Esophagus muscularis mucosa (tissue), 4 donors: ENCODE measurements at regions of chr6 and their contacts with region 1.

Region 1: DNA sequence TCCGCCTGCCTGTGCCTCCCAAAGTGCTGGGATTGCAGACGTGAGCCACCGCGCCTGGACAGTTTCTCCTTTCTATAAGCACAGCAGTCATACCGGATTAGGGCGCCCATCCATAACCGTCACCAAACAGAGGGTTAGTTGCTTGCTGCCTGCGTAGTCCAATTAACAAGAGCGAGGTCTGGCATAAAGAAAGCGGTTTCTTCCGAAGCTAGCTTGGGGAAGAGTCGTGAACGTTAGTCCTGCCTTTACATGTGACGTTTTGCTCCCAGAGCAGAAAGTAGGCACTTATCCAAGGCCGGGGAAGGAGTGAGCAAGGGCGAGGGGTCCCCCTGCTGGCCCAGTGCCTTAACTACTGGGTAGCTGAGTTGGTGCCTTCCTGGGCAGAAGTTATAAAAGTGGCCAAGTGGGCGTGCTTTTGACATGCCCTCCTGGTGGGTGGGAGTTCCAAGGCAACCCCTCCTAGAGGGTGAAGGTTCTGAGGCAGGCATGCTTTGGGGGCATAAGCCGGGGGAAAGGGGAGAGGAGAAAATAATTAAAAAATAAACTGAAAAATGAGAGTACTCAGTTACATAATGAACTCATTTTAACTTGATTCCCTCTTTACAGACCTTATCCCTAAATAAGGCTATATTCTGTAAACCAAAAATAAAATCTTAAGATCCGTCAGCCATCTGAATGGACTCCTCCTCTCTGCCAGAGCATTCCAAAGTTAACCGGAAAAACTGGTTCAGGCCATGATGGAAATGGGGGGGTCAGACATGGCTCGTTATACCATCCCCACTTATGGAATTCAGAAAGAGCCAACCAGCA is 88.0 kb downstream of the FAM217A start:
- DNase-seq: peak; percentile 96
- H3K4me3 ChIP-seq: peak overlapping the region; percentile 46 to 58 (median 52)
- H3K27ac ChIP-seq: peak overlapping the region; percentile 72 to 80 (median 78)
- H3K4me1 ChIP-seq: peaks cover 9 to 21% (median 18%) of the 10 kb centered on the region in 4 donors
- H3K27me3 ChIP-seq: no peaks in the 10 kb centered on the region
- CTCF ChIP-seq: peak; percentile 80 to 83 (median 81)
- EP300 ChIP-seq: no peak
- POLR2A ChIP-seq: no peak

Region 2: GRCh38 chr6:3848925-3849605 is 141.8 kb before region 1 on chr6 and contains the start of gene FAM50B:
- intact Hi-C with region 1: loop called (anchors 2 kb)
- DNase-seq: peak; percentile 97
- H3K4me3 ChIP-seq: peak within 1 kb of the TSS; percentile 55 to 64 (median 56)
- H3K27ac ChIP-seq: peak within 1 kb of the TSS; percentile 70 to 83 (median 74)
- H3K4me1 ChIP-seq: peaks cover 0 to 24% (median 22%) of the 10 kb centered on the region in 4 donors
- H3K27me3 ChIP-seq: no peaks in the 10 kb centered on the region
- CTCF ChIP-seq: peak; percentile 94 to 97 (median 97)
- EP300 ChIP-seq: no peak
- POLR2A ChIP-seq: no peak
- total RNA-seq, gene FAM50B: 12.5 to 26.6 (median 17.6) TPM

Region 3: DNA sequence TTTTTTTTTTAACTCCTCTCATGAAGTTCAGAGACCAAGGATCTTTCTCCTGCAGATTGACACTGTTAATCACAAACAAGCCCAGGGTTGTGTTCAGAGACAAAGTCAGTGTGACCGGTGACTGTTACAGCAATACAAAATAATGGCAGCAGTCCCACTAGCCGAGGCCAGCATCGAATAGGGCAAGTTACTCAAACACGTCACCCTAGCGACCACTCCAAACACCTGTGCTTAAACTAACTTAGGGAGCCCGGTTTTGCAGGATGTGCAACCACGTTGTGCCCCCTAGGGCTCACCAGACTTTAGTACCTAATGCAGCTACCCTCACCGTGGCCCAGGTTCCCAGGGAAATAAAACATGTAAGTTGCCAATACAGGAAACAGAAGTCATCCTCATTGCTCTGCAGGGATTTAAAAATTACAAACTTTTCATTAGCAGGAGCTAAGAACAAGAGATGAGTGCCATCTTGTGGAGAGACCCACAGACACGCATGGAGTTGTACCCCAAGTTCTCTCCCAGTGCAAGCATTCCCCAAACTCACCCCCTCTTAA is 103.7 kb before region 1 on chr6:
- intact Hi-C with region 1: loop called (anchors 5 kb)
- DNase-seq: no peak
- H3K4me3 ChIP-seq: no peak overlapping the region
- H3K27ac ChIP-seq: no peak overlapping the region
- H3K4me1 ChIP-seq: peaks cover 23 to 50% (median 33%) of the 10 kb centered on the region in 4 donors
- H3K27me3 ChIP-seq: no peaks in the 10 kb centered on the region
- CTCF ChIP-seq: peak; percentile 46 to 59 (median 48)
- EP300 ChIP-seq: no peak
- POLR2A ChIP-seq: no peak

Region 4: DNA sequence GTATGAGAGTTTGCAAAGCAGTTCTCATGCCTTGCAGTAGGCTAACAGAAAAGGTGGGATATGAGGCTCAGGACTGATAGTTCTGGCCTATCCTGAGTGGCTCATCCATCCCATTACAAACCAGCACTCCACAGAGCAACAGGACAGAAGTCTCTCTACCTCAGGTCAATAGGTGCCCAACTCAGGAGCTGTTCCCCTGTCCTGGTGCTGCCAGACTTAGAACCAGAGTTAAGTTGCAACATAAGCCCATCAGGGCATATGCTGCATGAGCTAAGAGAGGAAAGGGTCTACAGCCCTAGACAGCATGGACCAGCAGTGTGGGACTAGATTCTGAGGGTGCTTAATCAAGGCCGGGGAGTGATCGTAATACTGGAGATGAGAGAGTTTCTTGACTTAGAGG is 249.3 kb after region 1 on chr6:
- intact Hi-C with region 1: no loop called
- DNase-seq: peak; percentile 72
- H3K4me3 ChIP-seq: no peak overlapping the region
- H3K27ac ChIP-seq: no peak overlapping the region
- H3K4me1 ChIP-seq: no peaks in the 10 kb centered on the region
- H3K27me3 ChIP-seq: no peaks in the 10 kb centered on the region
- CTCF ChIP-seq: no peak
- EP300 ChIP-seq: no peak
- POLR2A ChIP-seq: no peak